IMR-90 (cell line): ENCODE measurements at regions of chr6 and their contacts with region 1.

Region 1: GRCh38 chr6:43667245-43668150 is 20.1 kb downstream of the MRPS18A start:
- DNase-seq: peak; percentile 60
- ATAC-seq: peak; percentile 73
- H3K4me3 ChIP-seq: no peak overlapping the region
- H3K27ac ChIP-seq: no peak overlapping the region
- H3K4me1 ChIP-seq: peaks cover 17% of the 10 kb centered on the region
- H3K27me3 ChIP-seq: no peaks in the 10 kb centered on the region
- CTCF ChIP-seq: peak; percentile 89
- POLR2A ChIP-seq: no peak
- RAD21 ChIP-seq: peak; percentile 91

Region 2: DNA sequence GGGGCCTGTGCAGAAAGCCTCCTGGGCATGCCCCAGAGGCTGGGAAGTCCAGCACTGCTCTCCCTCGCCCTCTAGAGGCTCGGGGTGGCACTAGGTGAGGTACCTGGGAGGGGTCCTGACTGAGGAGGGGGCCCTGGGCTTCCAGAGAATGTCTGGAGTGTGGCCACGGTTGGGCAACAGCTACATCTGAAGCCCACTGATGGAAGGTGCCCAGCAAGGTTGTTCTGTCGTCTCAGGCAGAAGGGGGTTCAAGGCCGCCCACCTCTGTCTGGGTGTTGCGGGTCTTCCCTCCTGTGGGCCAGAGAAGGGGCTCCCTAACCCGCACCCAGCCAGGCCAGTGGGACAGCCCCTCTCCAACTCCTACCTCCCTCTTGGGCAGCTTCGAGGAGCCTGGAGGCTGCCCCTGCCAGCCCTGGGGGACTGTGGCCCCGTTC is 91.1 kb after region 1 on chr6:
- CTCF ChIA-PET with region 1: interaction called, 3 read pairs
- POLR2A ChIA-PET with region 1: no interaction called
- dilution Hi-C with region 1: no loop called
- in situ Hi-C with region 1: no loop called
- intact Hi-C with region 1: loop called (anchors 1 kb)
- DNase-seq: no peak
- ATAC-seq: peak; percentile 52; the same call in 1 of the 2 replicates
- H3K4me3 ChIP-seq: no peak overlapping the region
- H3K27ac ChIP-seq: no peak overlapping the region
- H3K4me1 ChIP-seq: peaks cover 10% of the 10 kb centered on the region
- H3K27me3 ChIP-seq: peaks cover 37% of the 10 kb centered on the region
- CTCF ChIP-seq: peak; percentile 46
- POLR2A ChIP-seq: no peak
- RAD21 ChIP-seq: peak; percentile 46

Region 3: GRCh38 chr6:43951063-43951755 is 283.7 kb after region 1 on chr6:
- CTCF ChIA-PET with region 1: interaction called, 3 read pairs
- POLR2A ChIA-PET with region 1: no interaction called
- dilution Hi-C with region 1: no loop called
- in situ Hi-C with region 1: no loop called
- intact Hi-C with region 1: loop called (anchors 10 kb)
- DNase-seq: no peak
- ATAC-seq: peak; percentile 76
- H3K4me3 ChIP-seq: no peak overlapping the region
- H3K27ac ChIP-seq: no peak overlapping the region
- H3K4me1 ChIP-seq: peaks cover 13% of the 10 kb centered on the region
- H3K27me3 ChIP-seq: no peaks in the 10 kb centered on the region
- CTCF ChIP-seq: peak; percentile 47
- POLR2A ChIP-seq: no peak
- RAD21 ChIP-seq: peak; percentile 56

Region 4: GRCh38 chr6:44084231-44085014 is 416.9 kb after region 1 on chr6:
- CTCF ChIA-PET with region 1: interaction called, 6 read pairs
- POLR2A ChIA-PET with region 1: no interaction called
- dilution Hi-C with region 1: no loop called
- in situ Hi-C with region 1: loop called (anchors 5 kb)
- intact Hi-C with region 1: loop called (anchors 1 kb)
- DNase-seq: peak; percentile 75
- ATAC-seq: peak; percentile 36
- H3K4me3 ChIP-seq: no peak overlapping the region
- H3K27ac ChIP-seq: peak overlapping the region; percentile 31
- H3K4me1 ChIP-seq: peaks cover 11% of the 10 kb centered on the region
- H3K27me3 ChIP-seq: no peaks in the 10 kb centered on the region
- CTCF ChIP-seq: no peak
- POLR2A ChIP-seq: no peak
- RAD21 ChIP-seq: no peak

Region 5: DNA sequence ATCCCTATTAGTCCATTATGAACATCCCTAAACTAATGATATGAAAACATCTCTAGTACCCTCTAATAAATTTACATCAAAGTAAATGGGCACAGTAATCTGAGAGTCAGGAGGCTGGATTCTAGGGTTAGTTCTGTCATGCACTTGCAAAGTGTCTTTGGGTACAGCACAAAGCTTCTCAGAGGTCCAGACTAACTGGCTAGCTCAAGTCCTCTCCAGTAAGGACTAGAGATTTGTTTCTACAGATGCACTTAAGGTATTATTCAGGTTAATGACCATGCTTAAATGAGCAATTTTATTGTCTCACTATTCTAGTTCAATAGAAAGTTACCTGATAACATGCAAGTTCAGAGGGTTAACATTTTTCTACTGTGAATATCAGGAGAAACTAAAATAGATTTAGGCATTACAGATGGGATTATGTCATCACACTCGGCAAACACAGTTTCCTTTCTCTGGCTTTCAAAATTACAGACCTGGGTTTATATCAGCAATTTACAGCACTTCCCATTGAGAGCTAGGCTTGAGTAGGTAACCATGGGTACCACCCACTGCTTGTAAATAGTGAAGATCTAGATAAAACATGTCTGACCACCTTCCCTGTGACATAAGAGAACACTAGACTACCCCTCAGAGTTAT is 1257.7 kb after region 1 on chr6:
- CTCF ChIA-PET with region 1: no interaction called
- POLR2A ChIA-PET with region 1: no interaction called
- dilution Hi-C with region 1: no loop called
- in situ Hi-C with region 1: no loop called
- intact Hi-C with region 1: no loop called
- DNase-seq: peak; percentile 5
- ATAC-seq: 0 out of 2 replicates have a peak, but pooled peaks have one; percentile 11
- H3K4me3 ChIP-seq: no peak overlapping the region
- H3K27ac ChIP-seq: no peak overlapping the region
- H3K4me1 ChIP-seq: no peaks in the 10 kb centered on the region
- H3K27me3 ChIP-seq: no peaks in the 10 kb centered on the region
- CTCF ChIP-seq: no peak
- POLR2A ChIP-seq: no peak
- RAD21 ChIP-seq: no peak